Activated CD4-positive, alpha-beta T cell treated with anti-CD3 and anti-CD28 coated beads for 36 hours (primary cell): ENCODE measurements at regions of chr19 and their contacts with region 1.

Region 1: DNA sequence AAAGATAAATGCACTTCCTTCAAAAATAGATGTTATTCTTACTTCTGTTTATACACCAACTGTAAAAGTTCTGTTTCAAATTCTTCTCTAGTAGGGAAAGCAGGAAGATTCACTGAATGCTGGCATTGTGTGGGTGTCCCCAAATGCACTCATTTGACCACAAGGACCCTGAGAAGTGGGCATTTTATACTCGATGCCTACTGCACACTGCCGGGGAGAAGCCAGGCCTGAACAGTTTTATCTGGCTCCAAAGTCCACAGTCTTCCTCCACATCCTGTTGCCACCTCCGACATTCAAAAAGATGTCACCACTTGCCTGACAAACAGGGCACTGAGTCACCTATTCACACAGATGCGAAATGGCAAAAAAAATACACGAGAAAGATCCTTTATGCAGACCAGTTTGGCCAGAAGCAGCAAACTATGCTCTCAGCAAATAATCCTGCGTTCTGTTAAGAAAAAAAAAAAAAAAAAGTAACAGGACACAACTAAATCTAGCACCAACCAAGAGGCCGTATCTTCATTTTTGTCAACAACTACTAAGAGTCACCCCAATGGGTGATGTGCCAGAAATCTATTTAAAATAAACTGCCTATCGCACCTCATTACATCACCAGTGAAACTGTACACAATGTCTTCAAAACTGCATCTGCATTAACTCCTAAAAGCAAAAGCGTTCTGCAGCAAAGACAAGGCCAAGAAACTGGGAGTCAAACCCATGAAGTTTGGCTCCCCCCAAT is 6.2 kb downstream of the ZC3H4 start:
- DNase-seq: peak; percentile 63
- ATAC-seq: peak; percentile 59
- H3K4me3 Mint-ChIP-seq: peak overlapping the region; percentile 93
- H3K27ac Mint-ChIP-seq: peak overlapping the region; percentile 100
- H3K4me1 Mint-ChIP-seq: peaks cover 58% of the 10 kb centered on the region
- H3K27me3 Mint-ChIP-seq: no peaks in the 10 kb centered on the region

Region 2: DNA sequence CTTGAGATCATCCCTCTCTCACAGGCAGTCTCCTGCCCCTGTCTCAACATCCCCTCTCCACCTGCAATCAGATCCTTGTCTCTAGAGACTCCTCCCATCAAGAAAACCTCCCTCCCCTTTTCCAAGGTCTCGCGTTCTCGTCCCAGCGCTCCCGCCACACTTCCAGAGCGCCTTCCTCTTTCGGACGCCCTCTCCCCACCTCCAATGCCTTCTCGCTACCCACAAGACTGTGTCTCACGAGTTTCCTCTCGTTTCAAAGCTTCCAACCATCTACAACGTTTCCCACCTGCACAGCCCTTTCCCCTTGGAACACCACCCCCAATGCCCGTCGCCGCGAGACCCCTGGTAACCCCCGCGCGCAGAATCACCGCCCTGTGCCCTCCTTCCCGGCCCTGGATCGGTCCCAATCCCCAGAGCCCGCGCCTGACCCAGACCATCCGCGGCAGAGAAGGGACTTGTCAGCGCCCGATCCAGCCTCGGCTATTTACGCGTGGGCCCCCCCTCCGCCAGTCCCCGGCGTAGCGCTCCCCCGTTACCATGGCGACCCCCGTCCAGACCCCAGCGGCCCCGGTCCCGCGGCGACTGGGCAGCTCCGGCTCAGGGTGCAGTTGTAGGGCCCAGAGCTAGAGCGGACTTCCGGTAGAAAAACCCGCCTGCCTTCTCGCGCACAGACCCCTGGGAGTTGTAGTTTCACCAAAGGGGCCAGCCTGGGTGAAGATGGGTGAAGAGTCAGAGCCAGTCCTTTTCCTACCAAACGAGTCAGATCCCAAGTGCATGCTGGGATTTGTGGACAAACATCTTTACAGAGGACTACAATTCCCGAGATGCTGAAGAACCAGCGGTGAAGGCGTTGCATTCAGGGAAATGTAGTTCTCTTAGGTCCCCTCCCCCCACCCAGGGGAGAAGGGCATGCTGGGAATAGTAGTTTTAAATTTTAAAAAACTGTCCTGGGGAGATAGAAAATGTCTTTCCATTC is 256.9 kb before region 1 on chr19 and contains the start of gene AP2S1:
- CTCF ChIA-PET with region 1: no interaction called
- POLR2A ChIA-PET with region 1: no interaction called
- intact Hi-C with region 1: no loop called
- DNase-seq: peak; percentile 95
- ATAC-seq: peak; percentile 97
- H3K4me3 Mint-ChIP-seq: peak within 1 kb of the TSS; percentile 92
- H3K27ac Mint-ChIP-seq: peak within 1 kb of the TSS; percentile 64
- H3K4me1 Mint-ChIP-seq: peaks cover 21% of the 10 kb centered on the region
- H3K27me3 Mint-ChIP-seq: no peaks in the 10 kb centered on the region
- total RNA-seq, gene AP2S1: 102 to 104 TPM

Region 3: DNA sequence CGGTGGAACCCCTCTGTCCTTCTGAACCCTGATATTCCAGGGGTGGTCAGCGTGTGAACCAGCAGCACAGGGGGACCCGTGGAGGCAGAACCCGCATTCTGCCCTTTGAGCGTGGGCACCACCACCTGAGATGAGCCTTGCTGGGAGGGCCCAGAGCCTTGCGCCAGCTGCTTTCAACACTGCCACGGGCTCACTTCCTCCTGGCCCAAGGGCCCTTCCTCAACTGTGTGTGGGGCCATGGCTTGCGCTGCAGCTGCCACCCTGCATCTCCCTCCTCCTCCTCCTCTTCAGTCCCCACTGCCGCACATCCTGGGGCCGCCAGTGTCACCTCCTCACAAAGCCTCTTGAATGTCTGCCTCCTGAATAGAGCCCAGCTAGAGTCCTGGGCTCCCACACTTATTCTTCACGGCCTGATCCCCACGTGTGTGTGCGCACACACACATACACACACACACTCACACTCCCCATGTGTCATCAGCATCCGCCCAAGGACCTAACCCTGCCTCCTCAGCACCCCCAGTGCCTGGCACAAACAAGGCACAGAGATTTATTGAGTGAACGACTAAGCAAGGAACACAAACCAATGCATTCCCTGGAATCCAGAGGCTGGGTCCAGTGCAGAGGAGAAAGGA is 32.1 kb before region 1 on chr19:
- CTCF ChIA-PET with region 1: interaction called, 7 read pairs
- POLR2A ChIA-PET with region 1: no interaction called
- intact Hi-C with region 1: loop called in 1 of 2 experiments (anchors 1 kb)
- DNase-seq: no peak
- ATAC-seq: no peak
- H3K4me3 Mint-ChIP-seq: no peak overlapping the region
- H3K27ac Mint-ChIP-seq: no peak overlapping the region
- H3K4me1 Mint-ChIP-seq: peaks cover 3% of the 10 kb centered on the region
- H3K27me3 Mint-ChIP-seq: no peaks in the 10 kb centered on the region

Region 4: GRCh38 chr19:47094557-47095475 is 12.6 kb before region 1 on chr19:
- CTCF ChIA-PET with region 1: no interaction called
- POLR2A ChIA-PET with region 1: interaction called, 9 read pairs
- intact Hi-C with region 1: loop called (anchors 1 kb)
- DNase-seq: peak; percentile 70
- ATAC-seq: peak; percentile 77
- H3K4me3 Mint-ChIP-seq: peak overlapping the region; percentile 65
- H3K27ac Mint-ChIP-seq: peak overlapping the region; percentile 95
- H3K4me1 Mint-ChIP-seq: peaks cover 53% of the 10 kb centered on the region
- H3K27me3 Mint-ChIP-seq: no peaks in the 10 kb centered on the region